Transverse colon (tissue), 4 donors: ENCODE measurements at regions of chr18 and their contacts with region 1.

Region 1: GRCh38 chr18:6920099-6920899 is 190.8 kb downstream of the ARHGAP28 start:
- DNase-seq: peak; percentile 73
- H3K4me3 ChIP-seq: no peak overlapping the region
- H3K27ac ChIP-seq: no peak overlapping the region
- H3K4me1 ChIP-seq: no peaks in the 10 kb centered on the region
- H3K27me3 ChIP-seq: no peaks in the 10 kb centered on the region
- CTCF ChIP-seq: peak; percentile 60 to 92 (median 69)
- EP300 ChIP-seq: no peak
- POLR2A ChIP-seq: no peak

Region 2: GRCh38 chr18:7164323-7165004 is 244.2 kb after region 1 on chr18:
- in situ Hi-C with region 1: loop called in 1 of 4 experiments (anchors 25 kb)
- intact Hi-C with region 1: no loop called
- DNase-seq: no peak
- H3K4me3 ChIP-seq: no peak overlapping the region
- H3K27ac ChIP-seq: no peak overlapping the region
- H3K4me1 ChIP-seq: no peaks in the 10 kb centered on the region
- H3K27me3 ChIP-seq: no peaks in the 10 kb centered on the region
- CTCF ChIP-seq: no peak
- EP300 ChIP-seq: no peak
- POLR2A ChIP-seq: no peak